CD4-positive, alpha-beta T cell (primary cell): ENCODE measurements at regions of chr2 and their contacts with region 1.

Region 1: GRCh38 chr2:181178823-181179412 is 198.5 kb downstream of the UBE2E3 start:
- DNase-seq: peak in 11 of 14 experiments; percentile 9 to 71 (median 28)
- ATAC-seq: peak; percentile 81
- H3K4me3 ChIP-seq: no peak overlapping the region
- H3K4me3 Mint-ChIP-seq: no peak overlapping the region
- H3K27ac ChIP-seq: no peak overlapping the region
- H3K27ac Mint-ChIP-seq: peak overlapping the region; percentile 53
- H3K4me1 ChIP-seq: peaks cover 7% of the 10 kb centered on the region
- H3K4me1 Mint-ChIP-seq: peaks cover 47% of the 10 kb centered on the region
- H3K27me3 ChIP-seq: no peaks in the 10 kb centered on the region
- H3K27me3 Mint-ChIP-seq: no peaks in the 10 kb centered on the region
- CTCF ChIP-seq: peak; percentile 59

Region 2: GRCh38 chr2:181123798-181124231 is 55.1 kb before region 1 on chr2:
- CTCF ChIA-PET with region 1: no interaction called
- POLR2A ChIA-PET with region 1: no interaction called
- intact Hi-C with region 1: loop called in 1 of 2 experiments (anchors 10 kb)
- DNase-seq: peak in 13 of 14 experiments; percentile 29 to 94 (median 44)
- ATAC-seq: peak; percentile 95
- H3K4me3 ChIP-seq: peak overlapping the region; percentile 35
- H3K4me3 Mint-ChIP-seq: peak overlapping the region; percentile 65
- H3K27ac ChIP-seq: peak overlapping the region; percentile 87 to 90
- H3K27ac Mint-ChIP-seq: peak overlapping the region; percentile 99
- H3K4me1 ChIP-seq: peaks cover 17% of the 10 kb centered on the region
- H3K4me1 Mint-ChIP-seq: peaks cover 74% of the 10 kb centered on the region
- H3K27me3 ChIP-seq: no peaks in the 10 kb centered on the region
- H3K27me3 Mint-ChIP-seq: no peaks in the 10 kb centered on the region
- CTCF ChIP-seq: no peak